ENCODE measurements at regions of chr10 and their contacts with region 1.

Region 1: DNA sequence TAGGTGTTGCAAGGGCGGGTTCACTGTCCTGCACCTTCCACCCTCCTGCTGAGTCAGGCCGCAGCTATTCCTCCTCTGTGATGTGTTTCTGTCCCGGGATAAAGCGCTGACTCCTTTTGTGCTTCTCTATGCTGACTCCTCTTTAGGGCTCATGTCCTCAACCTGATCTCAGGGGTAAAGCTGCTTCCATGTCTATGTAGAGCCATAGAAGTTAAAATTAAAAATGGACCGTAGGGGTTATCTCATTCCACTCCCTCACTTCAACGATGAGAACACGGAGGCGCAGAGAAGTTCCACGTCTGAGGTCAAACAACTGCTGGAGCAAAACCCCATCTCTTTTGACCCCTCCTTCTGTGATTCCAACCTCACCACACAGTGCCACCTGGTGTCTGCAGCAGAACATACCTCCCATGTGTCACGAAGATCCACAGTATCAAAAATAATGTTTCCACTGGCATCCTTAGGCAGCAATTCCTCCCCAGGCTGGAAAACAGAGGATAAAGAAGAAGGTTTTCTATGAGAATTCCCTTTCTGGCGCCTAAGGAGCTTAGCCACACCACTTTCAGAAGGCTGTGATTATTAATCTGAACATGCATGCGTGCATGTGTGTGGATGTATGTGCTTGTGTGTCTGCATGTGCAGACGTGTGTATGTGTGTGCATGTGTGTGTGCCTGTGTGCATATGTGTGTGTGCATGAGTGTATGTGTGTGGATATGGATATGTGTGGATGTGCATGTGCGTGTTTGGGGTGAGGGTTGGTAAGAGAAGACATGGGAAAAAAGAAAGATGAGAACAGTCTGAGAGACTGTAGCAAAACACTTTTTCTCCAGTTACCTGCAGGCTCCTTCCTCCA is 81.2 kb upstream of the UCN3 start:
- DNase-seq: peak in 8 of 9 experiments; percentile 15 to 67 (median 54)
- ATAC-seq: peak; percentile 73
- H3K4me3 ChIP-seq: no peak overlapping the region
- H3K4me3 Mint-ChIP-seq: no peak overlapping the region
- H3K27ac ChIP-seq: no peak overlapping the region
- H3K27ac Mint-ChIP-seq: no peak overlapping the region
- H3K4me1 ChIP-seq: peaks cover 11% of the 10 kb centered on the region
- H3K4me1 Mint-ChIP-seq: peaks cover 17% of the 10 kb centered on the region
- H3K27me3 ChIP-seq: no peaks in the 10 kb centered on the region
- H3K27me3 Mint-ChIP-seq: no peaks in the 10 kb centered on the region
- CTCF ChIP-seq: peak; percentile 52

Region 2: GRCh38 chr10:4813023-4813422 is 470.5 kb before region 1 on chr10:
- CTCF ChIA-PET with region 1: interaction called, 10 read pairs
- POLR2A ChIA-PET with region 1: no interaction called
- intact Hi-C with region 1: loop called in 1 of 2 experiments (anchors 10 kb)
- DNase-seq: no peak
- ATAC-seq: no peak
- H3K4me3 ChIP-seq: no peak overlapping the region
- H3K4me3 Mint-ChIP-seq: no peak overlapping the region
- H3K27ac ChIP-seq: no peak overlapping the region
- H3K27ac Mint-ChIP-seq: no peak overlapping the region
- H3K4me1 ChIP-seq: no peaks in the 10 kb centered on the region
- H3K4me1 Mint-ChIP-seq: no peaks in the 10 kb centered on the region
- H3K27me3 ChIP-seq: peaks cover 0 to 3% of the 10 kb centered on the region in 2 experiments
- H3K27me3 Mint-ChIP-seq: peaks cover 7% of the 10 kb centered on the region
- CTCF ChIP-seq: no peak

Region 3: DNA sequence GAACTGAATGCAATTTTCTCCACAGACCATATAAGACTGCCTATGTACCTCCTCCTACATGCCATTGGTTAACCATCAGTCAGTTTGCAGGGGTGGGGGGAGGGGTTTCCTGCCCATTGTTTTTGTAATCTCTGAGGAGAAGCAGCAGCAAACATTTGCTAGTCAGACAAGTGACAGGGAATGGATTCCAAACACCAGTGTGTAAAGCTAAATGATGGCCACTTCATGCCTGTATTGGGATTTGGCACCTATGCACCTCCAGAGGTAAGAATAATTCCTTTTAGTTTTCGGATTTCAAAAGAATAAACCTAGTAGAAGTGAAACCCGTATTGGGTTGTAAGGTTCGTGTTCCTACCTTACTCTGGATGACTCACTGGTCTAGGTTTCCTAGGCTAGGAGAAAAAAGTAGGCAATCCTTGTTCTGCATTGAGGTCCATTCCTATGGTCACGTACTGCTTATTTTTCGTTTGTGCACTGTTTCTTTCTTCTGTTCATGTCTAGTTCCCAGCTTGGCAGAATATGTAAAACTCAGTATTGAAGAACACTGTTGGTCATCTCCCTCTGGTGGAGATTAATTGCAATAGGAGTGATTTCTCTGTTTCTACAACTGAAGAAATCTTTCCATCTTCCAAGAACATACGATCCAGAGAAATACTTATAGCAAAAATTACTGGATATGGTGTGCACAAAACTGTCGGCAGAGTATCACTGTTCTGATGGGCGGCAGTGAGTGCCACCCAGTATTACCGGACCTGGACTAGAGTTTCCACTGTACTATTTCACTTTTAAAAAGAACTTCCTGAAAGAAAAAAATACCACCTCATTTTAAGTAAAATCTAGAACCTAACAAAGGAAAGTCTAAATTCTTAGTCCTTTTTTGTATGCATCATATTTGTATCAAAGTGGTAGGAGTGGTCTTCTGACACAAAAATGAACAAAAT is 189.0 kb before region 1 on chr10 and contains the start of gene AKR1C3:
- CTCF ChIA-PET with region 1: interaction called, 3 read pairs
- POLR2A ChIA-PET with region 1: interaction called, 3 read pairs
- intact Hi-C with region 1: loop called (anchors 2 to 5 kb)
- DNase-seq: peak in 2 of 9 experiments; percentile 48 to 51
- ATAC-seq: peak; percentile 77
- H3K4me3 ChIP-seq: peak within 1 kb of the TSS; percentile 44 to 50
- H3K4me3 Mint-ChIP-seq: peak within 1 kb of the TSS; percentile 80
- H3K27ac ChIP-seq: peak within 1 kb of the TSS in 1 of 2 experiments; percentile 34
- H3K27ac Mint-ChIP-seq: peak within 1 kb of the TSS; percentile 3
- H3K4me1 ChIP-seq: peaks cover 3% of the 10 kb centered on the region
- H3K4me1 Mint-ChIP-seq: peaks cover 6% of the 10 kb centered on the region
- H3K27me3 ChIP-seq: no peaks in the 10 kb centered on the region
- H3K27me3 Mint-ChIP-seq: no peaks in the 10 kb centered on the region
- CTCF ChIP-seq: peak; percentile 48
- total RNA-seq, gene AKR1C3: 0.53 to 0.57 TPM

Region 4: DNA sequence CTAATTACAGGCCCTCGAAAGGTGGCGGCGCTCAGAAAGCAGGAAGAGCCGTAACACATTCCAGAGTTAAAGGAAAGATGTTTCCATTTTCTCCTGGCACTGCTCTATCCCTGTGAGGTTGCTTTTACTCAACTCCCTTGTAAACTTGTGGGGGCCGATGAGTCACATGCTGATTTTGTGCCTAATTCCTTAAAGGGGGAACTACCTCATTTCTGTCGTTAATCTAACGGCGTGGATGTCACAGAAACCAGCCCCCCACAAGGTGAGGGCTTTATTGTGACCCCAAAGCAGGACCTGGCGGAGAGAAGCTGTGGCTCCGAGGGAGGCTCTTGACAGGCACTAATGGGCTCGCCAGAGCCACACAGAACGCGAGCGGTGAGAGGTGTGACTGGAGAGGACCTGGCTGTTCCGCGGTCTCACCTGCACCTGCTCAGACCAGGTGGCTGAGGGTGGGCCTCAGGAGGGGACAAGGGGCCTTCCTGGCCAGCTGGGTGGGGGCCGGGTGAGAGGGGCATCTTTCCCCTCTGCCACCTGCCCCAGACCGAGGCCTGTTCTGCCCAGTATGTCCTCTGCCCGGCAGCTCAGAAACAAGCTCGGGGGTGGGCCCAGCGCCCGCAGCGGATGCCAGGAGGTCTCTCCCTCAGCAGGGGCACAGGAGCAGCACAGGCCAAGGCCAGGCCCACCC is 292.1 kb after region 1 on chr10:
- CTCF ChIA-PET with region 1: no interaction called
- POLR2A ChIA-PET with region 1: no interaction called
- intact Hi-C with region 1: no loop called
- DNase-seq: no peak
- ATAC-seq: no peak
- H3K4me3 ChIP-seq: no peak overlapping the region
- H3K4me3 Mint-ChIP-seq: no peak overlapping the region
- H3K27ac ChIP-seq: no peak overlapping the region
- H3K27ac Mint-ChIP-seq: no peak overlapping the region
- H3K4me1 ChIP-seq: no peaks in the 10 kb centered on the region
- H3K4me1 Mint-ChIP-seq: no peaks in the 10 kb centered on the region
- H3K27me3 ChIP-seq: no peaks in the 10 kb centered on the region
- H3K27me3 Mint-ChIP-seq: no peaks in the 10 kb centered on the region
- CTCF ChIP-seq: no peak

Region 5: GRCh38 chr10:6275022-6275997 is 991.8 kb after region 1 on chr10:
- CTCF ChIA-PET with region 1: no interaction called
- POLR2A ChIA-PET with region 1: no interaction called
- intact Hi-C with region 1: no loop called
- DNase-seq: peak; percentile 73 to 97 (median 84)
- ATAC-seq: peak; percentile 86
- H3K4me3 ChIP-seq: peak overlapping the region in 1 of 2 experiments; percentile 37
- H3K4me3 Mint-ChIP-seq: peak overlapping the region; percentile 61
- H3K27ac ChIP-seq: peak overlapping the region; percentile 39 to 86
- H3K27ac Mint-ChIP-seq: peak overlapping the region; percentile 92
- H3K4me1 ChIP-seq: peaks cover 31% of the 10 kb centered on the region
- H3K4me1 Mint-ChIP-seq: peaks cover 42% of the 10 kb centered on the region
- H3K27me3 ChIP-seq: no peaks in the 10 kb centered on the region
- H3K27me3 Mint-ChIP-seq: no peaks in the 10 kb centered on the region
- CTCF ChIP-seq: no peak